Common myeloid progenitor, CD34-positive (primary cell): ENCODE measurements at regions of chr21 and their contacts with region 1.

Region 1: DNA sequence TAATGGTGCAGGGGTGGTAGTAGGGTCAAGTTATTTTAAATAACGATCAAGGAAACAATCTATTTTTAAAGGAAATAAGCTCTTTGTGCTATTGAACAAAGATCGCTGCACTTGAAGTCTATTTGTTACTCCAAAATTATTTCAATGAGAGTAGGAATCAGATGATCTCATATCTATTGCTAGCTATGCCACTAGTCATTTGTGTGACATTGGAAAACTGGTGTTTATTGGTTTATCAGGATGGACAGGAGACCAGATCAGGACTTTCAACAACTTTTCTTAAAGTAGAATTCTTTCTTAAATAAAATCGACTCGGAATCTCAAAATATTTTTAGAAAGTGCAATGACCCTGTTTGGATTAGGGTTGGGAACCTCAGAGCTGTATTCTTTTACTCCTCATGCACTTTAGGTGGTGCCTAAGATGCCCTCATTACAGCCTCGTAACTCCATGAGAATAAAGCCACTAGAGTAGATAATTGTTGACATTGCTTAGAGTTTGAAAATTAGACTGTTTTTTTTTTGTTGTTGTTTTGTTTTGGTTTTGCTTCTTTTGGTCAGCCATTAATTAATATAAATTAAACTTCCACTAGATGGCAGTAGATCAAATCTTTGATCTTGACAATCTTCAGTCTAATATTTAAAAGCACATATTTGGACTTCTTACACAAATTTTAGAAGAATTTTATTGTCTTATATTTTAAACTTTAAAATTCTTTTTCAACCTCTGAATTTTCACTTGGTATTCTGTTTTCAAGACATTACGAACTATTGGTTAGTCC is 352.4 kb downstream of the USP25 start:
- DNase-seq: peak; percentile 36 to 58 (median 51)
- H3K4me3 ChIP-seq: no peak overlapping the region
- H3K27ac ChIP-seq: no peak overlapping the region
- H3K4me1 ChIP-seq: no peaks in the 10 kb centered on the region
- H3K27me3 ChIP-seq: no peaks in the 10 kb centered on the region

Region 2: GRCh38 chr21:16133248-16133647 is 51.0 kb after region 1 on chr21:
- CTCF ChIA-PET with region 1: no interaction called
- POLR2A ChIA-PET with region 1: no interaction called
- DNase-seq: no peak
- H3K4me3 ChIP-seq: no peak overlapping the region
- H3K27ac ChIP-seq: no peak overlapping the region
- H3K4me1 ChIP-seq: no peaks in the 10 kb centered on the region
- H3K27me3 ChIP-seq: no peaks in the 10 kb centered on the region

Region 3: DNA sequence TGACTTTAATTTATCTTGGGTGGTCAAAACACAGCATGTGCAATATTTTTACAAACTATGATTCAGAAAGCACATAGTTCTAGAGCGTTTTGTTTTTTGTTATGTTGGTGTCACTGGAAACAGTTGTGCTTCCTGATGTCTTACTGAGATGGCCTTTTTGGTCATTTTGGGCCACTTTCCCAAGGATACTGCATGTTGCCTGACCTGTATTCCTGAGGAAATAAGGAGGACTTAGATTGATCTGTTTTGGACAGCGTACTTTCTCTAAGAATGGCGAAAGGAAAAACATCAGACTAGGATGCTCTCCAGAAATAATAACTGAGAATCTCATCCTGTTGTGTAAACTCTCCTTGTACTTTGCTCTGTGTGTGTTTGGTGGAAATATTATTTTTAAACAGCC is 98.8 kb after region 1 on chr21:
- CTCF ChIA-PET with region 1: interaction called, 10 read pairs
- POLR2A ChIA-PET with region 1: no interaction called
- DNase-seq: no peak
- H3K4me3 ChIP-seq: no peak overlapping the region
- H3K27ac ChIP-seq: peak overlapping the region in 1 of 2 experiments; percentile 57
- H3K4me1 ChIP-seq: peaks cover 9 to 23% (median 15%) of the 10 kb centered on the region in 4 experiments
- H3K27me3 ChIP-seq: no peaks in the 10 kb centered on the region

Region 4: DNA sequence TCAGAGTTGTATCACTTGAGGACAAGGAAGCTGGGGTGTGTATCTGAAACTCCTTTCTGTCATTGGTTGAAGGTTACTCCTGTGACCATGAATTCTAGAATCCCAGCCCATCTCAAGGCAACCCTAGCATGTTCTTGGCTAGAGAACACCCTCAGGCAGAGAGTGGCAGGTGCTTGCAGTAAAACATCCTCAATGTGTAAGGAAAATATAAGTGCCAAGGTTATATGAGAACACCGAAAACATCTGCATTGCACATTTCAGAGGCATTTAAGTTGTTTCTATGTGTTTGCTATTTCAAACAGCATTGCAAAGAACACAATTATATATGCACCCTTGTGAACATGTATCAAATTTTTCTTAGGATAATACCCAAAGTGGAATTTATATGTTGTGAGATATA is 119.5 kb after region 1 on chr21:
- CTCF ChIA-PET with region 1: no interaction called
- POLR2A ChIA-PET with region 1: no interaction called
- DNase-seq: no peak
- H3K4me3 ChIP-seq: no peak overlapping the region
- H3K27ac ChIP-seq: no peak overlapping the region
- H3K4me1 ChIP-seq: peaks cover 2 to 12% (median 7%) of the 10 kb centered on the region in 4 experiments
- H3K27me3 ChIP-seq: no peaks in the 10 kb centered on the region

Region 5: DNA sequence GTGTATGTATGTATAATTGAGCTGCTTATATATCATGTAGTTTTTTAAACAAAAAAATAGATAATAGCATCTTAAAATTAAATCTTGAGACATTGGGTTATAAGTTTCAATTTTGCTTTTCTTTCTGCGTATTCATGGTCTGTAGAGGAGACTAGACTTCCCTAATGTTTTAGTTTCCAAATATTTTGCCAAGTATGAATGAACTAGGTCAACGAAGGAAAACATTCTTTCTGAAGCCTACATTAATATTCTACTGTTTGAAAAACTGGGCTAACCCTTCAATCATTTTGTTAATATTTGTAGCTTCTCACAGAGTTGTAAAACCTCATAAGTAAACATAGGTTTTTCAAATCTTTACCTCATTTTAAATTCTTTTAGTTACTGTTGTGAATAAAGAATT is 240.2 kb after region 1 on chr21:
- CTCF ChIA-PET with region 1: interaction called, 46 read pairs
- POLR2A ChIA-PET with region 1: no interaction called
- DNase-seq: no peak
- H3K4me3 ChIP-seq: no peak overlapping the region
- H3K27ac ChIP-seq: no peak overlapping the region
- H3K4me1 ChIP-seq: peaks cover 0 to 6% (median 3%) of the 10 kb centered on the region in 4 experiments
- H3K27me3 ChIP-seq: no peaks in the 10 kb centered on the region

Region 6: GRCh38 chr21:16330082-16330907 is 248.1 kb after region 1 on chr21:
- CTCF ChIA-PET with region 1: interaction called, 46 read pairs
- POLR2A ChIA-PET with region 1: no interaction called
- DNase-seq: peak; percentile 77 to 87 (median 85)
- H3K4me3 ChIP-seq: no peak overlapping the region
- H3K27ac ChIP-seq: no peak overlapping the region
- H3K4me1 ChIP-seq: peaks cover 0 to 2% (median under 1%) of the 10 kb centered on the region in 4 experiments
- H3K27me3 ChIP-seq: no peaks in the 10 kb centered on the region